H1 (cell line): ENCODE measurements at regions of chr2 and their contacts with region 1.

Region 1: GRCh38 chr2:16034151-16034973 is 94.0 kb downstream of the MYCN start:
- DNase-seq: peak in 1 of 2 experiments; percentile 80
- H3K4me3 ChIP-seq: no peak overlapping the region
- H3K27ac ChIP-seq: no peak overlapping the region
- H3K4me1 ChIP-seq: peaks cover 2 to 10% (median 4%) of the 10 kb centered on the region in 4 experiments
- H3K27me3 ChIP-seq: no peaks in the 10 kb centered on the region
- CTCF ChIP-seq: peak; percentile 64 to 87 (median 87)
- EP300 ChIP-seq: no peak
- POLR2A ChIP-seq: no peak
- RAD21 ChIP-seq: peak; percentile 60 to 76

Region 2: DNA sequence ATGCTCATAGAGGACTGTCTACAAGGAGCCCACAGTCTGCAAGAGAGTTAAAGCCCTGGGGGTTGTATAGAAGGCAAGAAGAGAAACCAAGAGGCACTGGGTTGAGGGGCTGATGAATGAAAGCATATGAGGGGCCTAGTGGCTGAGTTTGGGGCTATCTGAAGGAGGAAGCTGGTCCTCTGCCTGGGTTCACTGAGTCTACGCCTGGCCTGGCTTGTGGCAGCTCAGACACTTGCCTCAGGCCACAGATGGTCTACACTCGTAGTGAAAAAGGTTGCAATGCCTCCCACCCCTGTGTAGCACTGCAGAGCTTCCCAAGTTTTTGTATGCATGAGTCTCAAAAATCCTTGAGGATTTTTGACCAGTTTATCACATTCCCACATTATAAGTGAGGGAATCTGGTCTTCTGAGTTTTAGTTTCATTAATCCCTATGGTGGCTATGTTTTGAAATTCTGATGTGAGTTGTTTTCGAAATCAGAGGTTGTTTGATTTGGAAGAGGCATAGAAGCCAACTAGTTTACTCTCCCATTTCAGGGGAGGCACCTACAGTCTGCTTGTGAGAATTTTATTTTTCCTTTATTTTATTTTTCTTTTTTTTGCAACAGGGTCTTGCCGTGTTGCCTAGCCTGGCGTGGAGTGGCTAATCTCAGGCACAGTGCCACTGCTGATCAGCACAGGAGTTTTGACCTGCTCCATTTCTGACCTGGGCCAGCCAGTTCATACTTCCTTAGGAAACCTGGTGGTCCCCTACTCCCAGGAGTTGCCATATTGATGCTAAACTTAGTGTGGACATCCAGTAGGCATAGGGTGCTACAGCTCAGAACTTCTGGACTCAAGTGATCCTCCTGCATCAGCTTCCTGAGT is 84.0 kb before region 1 on chr2:
- CTCF ChIA-PET with region 1: interaction called, 12 read pairs
- POLR2A ChIA-PET with region 1: no interaction called
- DNase-seq: no peak
- H3K4me3 ChIP-seq: no peak overlapping the region
- H3K27ac ChIP-seq: no peak overlapping the region
- H3K4me1 ChIP-seq: peaks cover 0 to 7% (median 4%) of the 10 kb centered on the region in 4 experiments; a peak in 3 of 7 replicates
- H3K27me3 ChIP-seq: no peaks in the 10 kb centered on the region
- CTCF ChIP-seq: no peak
- EP300 ChIP-seq: no peak
- POLR2A ChIP-seq: no peak
- RAD21 ChIP-seq: no peak

Region 3: DNA sequence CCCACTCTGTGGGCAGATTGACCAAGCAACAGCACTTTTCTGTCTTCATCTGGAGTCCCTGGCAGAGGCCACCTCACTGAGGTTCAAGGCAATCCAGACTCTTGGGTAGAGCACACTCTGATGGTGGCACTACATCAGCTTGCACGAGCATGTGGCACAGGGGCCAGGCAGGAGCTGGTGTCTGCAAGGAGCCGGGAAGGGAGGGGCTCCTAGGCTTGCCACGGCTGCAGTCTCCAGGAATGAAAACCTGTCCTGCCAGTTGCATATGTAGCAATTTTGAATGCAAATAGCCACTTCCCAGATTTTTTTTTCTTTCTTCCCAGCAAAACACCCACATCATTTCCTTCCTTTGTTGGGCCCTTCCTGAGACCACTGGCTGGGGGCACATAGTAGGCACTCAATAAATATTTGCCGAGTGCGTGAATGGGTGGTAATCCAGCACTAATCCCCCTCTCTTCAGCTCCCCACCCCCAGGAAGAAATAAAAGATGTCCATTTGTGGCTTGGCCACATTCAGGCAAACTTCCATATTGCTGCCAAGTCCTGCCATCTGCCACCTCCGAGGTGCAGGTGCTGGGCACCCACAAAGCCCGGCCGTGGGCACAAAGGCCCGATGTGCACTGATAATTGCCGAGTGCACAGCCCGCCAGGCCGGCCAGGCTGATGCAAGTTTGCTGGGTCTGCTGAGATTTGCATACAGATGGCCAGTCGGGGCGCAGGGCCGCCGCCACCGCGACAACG is 21.6 kb before region 1 on chr2:
- CTCF ChIA-PET with region 1: interaction called, 120 read pairs
- POLR2A ChIA-PET with region 1: interaction called, 4 read pairs
- DNase-seq: peak in 1 of 2 experiments; percentile 66
- H3K4me3 ChIP-seq: peak overlapping the region in 2 of 4 experiments; percentile 19 to 20; a peak in 2 of 8 replicates
- H3K27ac ChIP-seq: 0 out of 2 replicates have a peak overlapping the region, but pooled peaks have one; percentile 5
- H3K4me1 ChIP-seq: peaks cover 14 to 23% (median 16%) of the 10 kb centered on the region in 4 experiments
- H3K27me3 ChIP-seq: peaks cover 0 to 4% (median 2%) of the 10 kb centered on the region in 4 experiments; a peak in 1 of 7 replicates
- CTCF ChIP-seq: no peak
- EP300 ChIP-seq: no peak
- POLR2A ChIP-seq: no peak; a peak in 1 of 3 replicates
- RAD21 ChIP-seq: peak; percentile 3 to 16; a peak in 2 of 4 replicates

Region 4: DNA sequence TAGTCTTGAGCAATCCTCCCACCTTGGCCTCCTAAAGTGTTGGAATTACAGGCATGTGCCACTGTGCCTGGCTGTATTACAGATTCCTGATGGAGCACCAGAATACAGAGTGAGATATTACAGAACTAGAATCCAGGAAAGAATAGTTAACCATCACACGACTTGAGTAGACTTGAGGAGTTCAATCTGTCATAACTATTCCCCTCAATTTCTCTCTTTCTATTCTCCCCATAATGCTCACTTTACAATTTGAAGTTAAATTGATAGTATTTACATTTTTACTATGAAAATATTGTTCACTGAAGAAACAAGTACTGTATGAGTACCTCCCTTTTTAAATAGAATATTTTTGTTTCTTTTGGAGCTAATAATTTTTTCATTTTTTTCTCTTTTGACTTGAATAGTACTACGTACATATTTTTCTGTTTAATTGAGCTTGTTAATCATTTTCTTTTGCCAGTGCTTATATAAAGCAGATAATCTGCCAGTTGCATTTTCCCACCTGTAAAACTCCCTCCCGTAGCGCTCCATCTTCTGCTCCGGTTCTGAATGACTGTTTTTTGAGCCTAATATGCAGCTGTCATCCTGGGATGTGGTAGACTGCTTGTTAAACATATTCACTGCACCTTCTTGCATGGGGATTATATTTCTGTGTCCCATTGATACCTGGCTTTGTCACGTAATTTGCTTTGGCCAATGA is 11.4 kb after region 1 on chr2:
- CTCF ChIA-PET with region 1: interaction called, 19 read pairs
- POLR2A ChIA-PET with region 1: no interaction called
- DNase-seq: no peak
- H3K4me3 ChIP-seq: no peak overlapping the region
- H3K27ac ChIP-seq: no peak overlapping the region
- H3K4me1 ChIP-seq: peaks cover 0 to 4% (median 2%) of the 10 kb centered on the region in 4 experiments; a peak in 3 of 7 replicates
- H3K27me3 ChIP-seq: no peaks in the 10 kb centered on the region; a peak in 1 of 7 replicates
- CTCF ChIP-seq: no peak
- EP300 ChIP-seq: no peak
- POLR2A ChIP-seq: no peak
- RAD21 ChIP-seq: no peak

Region 5: DNA sequence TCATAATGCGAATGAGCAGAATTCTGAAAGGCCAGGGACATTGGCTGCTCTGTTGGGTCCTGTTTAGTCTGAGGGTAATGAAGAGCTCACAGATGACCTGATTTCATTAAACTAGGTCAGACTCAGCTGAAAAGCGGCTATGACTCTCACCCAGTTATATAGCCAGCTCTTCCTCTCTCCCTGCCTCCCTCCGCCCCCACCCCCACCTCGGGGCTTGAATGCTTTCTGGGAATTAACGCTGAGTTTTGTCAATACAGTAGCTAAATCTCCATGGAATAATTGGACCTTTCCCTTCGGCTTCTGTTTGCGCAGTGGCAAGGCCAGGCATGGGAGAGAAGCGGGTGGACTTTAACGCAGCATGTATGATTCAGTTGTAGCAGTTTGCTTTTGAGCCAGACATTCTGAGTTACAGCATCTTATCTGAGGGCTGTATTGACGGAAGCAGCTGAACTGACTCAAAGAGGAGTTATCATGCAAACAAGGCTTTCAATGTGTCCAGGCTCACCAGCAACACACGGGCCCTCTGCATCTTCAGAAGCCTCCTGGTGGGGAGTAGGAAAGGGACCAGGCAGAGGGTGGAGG is 16.6 kb after region 1 on chr2:
- CTCF ChIA-PET with region 1: interaction called, 19 read pairs
- POLR2A ChIA-PET with region 1: no interaction called
- DNase-seq: no peak
- H3K4me3 ChIP-seq: no peak overlapping the region
- H3K27ac ChIP-seq: no peak overlapping the region
- H3K4me1 ChIP-seq: peaks cover 0 to 8% (median 4%) of the 10 kb centered on the region in 4 experiments; a peak in 4 of 7 replicates
- H3K27me3 ChIP-seq: no peaks in the 10 kb centered on the region
- CTCF ChIP-seq: no peak
- EP300 ChIP-seq: no peak
- POLR2A ChIP-seq: no peak
- RAD21 ChIP-seq: no peak; a peak in 1 of 4 replicates

Region 6: DNA sequence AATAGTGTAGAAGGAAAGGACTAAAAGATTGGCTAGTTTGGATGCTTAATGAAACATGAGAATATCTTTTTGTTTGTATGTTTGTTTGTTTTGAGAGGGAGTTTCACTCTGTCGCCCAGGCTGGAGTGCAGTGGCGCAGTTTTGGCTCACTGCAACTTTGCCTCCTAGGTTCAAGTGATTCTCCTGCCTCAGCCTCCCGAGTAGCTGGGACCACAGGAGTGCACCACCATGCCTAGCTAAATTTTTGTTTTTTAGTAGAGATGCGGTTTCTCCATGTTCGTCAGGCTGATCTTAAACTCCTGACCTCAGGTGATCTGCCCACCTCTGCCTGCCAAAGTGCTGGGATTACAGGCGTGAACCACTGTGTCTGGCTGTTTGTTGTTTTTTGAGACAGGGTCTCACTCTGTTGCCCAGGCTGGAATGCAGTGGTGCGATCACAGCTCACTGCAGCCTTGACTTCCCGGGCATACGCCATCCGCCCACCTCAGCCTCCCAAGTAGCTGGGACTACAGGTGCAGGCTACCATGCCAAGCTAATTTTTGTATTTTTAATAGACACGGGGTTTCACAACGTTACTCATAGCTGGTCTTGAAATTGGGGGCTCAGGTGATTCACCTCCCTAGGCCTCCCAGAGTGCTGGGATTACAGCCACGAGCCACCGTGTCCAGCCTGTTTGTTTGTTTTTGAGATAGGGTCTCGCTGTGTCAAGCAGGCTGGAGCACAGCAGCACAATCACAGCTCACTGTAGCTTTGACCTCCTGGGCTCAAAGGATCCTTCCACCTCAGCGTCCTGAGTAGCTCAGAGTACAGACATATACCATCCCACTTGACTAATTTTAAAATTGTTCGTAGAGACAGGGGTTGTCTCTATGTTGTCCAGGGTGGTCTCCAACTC is 115.2 kb after region 1 on chr2:
- CTCF ChIA-PET with region 1: interaction called, 10 read pairs
- POLR2A ChIA-PET with region 1: no interaction called
- DNase-seq: peak in 1 of 2 experiments; percentile 31
- H3K4me3 ChIP-seq: no peak overlapping the region
- H3K27ac ChIP-seq: no peak overlapping the region
- H3K4me1 ChIP-seq: no peaks in the 10 kb centered on the region
- H3K27me3 ChIP-seq: no peaks in the 10 kb centered on the region
- CTCF ChIP-seq: no peak
- EP300 ChIP-seq: no peak
- POLR2A ChIP-seq: no peak
- RAD21 ChIP-seq: no peak

Region 7: DNA sequence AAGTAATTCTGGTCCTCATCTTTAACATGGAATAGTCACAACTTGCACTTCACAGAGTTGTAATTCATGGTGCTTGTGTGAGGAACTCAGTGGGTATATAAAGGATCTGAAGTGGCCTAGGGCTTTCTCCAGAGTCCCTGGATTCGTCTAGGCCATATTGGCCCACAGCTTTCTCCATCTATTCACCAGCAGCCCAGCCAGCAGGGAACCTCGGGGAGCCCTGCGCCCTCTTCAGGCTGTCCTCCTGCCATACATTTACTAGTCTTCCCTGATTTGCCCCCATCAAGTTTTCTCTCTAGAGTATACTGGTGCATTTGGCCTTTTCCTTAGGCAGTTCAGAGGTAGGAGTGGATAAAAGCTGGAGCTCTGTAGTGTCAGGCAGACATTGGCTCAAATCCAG is 184.3 kb after region 1 on chr2:
- CTCF ChIA-PET with region 1: interaction called, 10 read pairs
- POLR2A ChIA-PET with region 1: no interaction called
- DNase-seq: peak in 1 of 2 experiments; percentile 63
- H3K4me3 ChIP-seq: no peak overlapping the region
- H3K27ac ChIP-seq: no peak overlapping the region
- H3K4me1 ChIP-seq: peaks cover 0 to 15% (median 4%) of the 10 kb centered on the region in 4 experiments; a peak in 5 of 7 replicates
- H3K27me3 ChIP-seq: no peaks in the 10 kb centered on the region
- CTCF ChIP-seq: peak; percentile 59 to 70 (median 61)
- EP300 ChIP-seq: no peak
- POLR2A ChIP-seq: no peak
- RAD21 ChIP-seq: peak; percentile 64 to 70